CD4-positive, alpha-beta T cell (primary cell): ENCODE measurements at regions of chr9 and their contacts with region 1.

Region 1: DNA sequence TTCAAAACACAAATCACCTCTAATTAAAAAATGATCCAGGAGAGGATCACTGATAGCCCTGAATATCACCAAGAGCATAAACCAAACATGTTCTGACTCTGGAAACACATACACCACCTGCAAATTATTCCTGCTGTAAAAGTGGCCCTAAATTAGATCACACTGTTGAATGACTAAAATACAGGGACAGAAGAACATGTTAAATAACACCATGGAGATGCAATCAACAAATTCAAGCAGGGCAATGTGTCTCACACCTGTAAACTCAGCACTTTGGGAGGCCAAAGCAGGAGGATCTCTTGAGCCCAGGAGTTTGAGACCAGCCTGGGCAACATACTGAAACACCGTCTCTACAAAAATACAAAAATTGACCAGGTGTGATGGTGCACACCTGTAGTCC is 18.2 kb upstream of the SPOUT1 start:
- DNase-seq: no peak
- ATAC-seq: no peak
- H3K4me3 ChIP-seq: no peak overlapping the region
- H3K4me3 Mint-ChIP-seq: no peak overlapping the region
- H3K27ac ChIP-seq: no peak overlapping the region
- H3K27ac Mint-ChIP-seq: no peak overlapping the region
- H3K4me1 ChIP-seq: no peaks in the 10 kb centered on the region
- H3K4me1 Mint-ChIP-seq: no peaks in the 10 kb centered on the region
- H3K27me3 ChIP-seq: no peaks in the 10 kb centered on the region
- H3K27me3 Mint-ChIP-seq: no peaks in the 10 kb centered on the region
- CTCF ChIP-seq: no peak

Region 2: GRCh38 chr9:127333221-127334064 is 1514.4 kb before region 1 on chr9:
- CTCF ChIA-PET with region 1: no interaction called
- POLR2A ChIA-PET with region 1: no interaction called
- intact Hi-C with region 1: no loop called
- DNase-seq: no peak
- ATAC-seq: no peak
- H3K4me3 ChIP-seq: no peak overlapping the region
- H3K4me3 Mint-ChIP-seq: no peak overlapping the region
- H3K27ac ChIP-seq: no peak overlapping the region
- H3K27ac Mint-ChIP-seq: no peak overlapping the region
- H3K4me1 ChIP-seq: no peaks in the 10 kb centered on the region
- H3K4me1 Mint-ChIP-seq: no peaks in the 10 kb centered on the region
- H3K27me3 ChIP-seq: no peaks in the 10 kb centered on the region
- H3K27me3 Mint-ChIP-seq: peaks cover 33% of the 10 kb centered on the region
- CTCF ChIP-seq: no peak

Region 3: GRCh38 chr9:128927731-128928411 is 80.1 kb after region 1 on chr9:
- CTCF ChIA-PET with region 1: interaction called, 5 read pairs
- POLR2A ChIA-PET with region 1: no interaction called
- intact Hi-C with region 1: loop called in 1 of 2 experiments (anchors 1 kb)
- DNase-seq: peak; percentile 38 to 77 (median 46)
- ATAC-seq: peak; percentile 84
- H3K4me3 ChIP-seq: no peak overlapping the region
- H3K4me3 Mint-ChIP-seq: no peak overlapping the region
- H3K27ac ChIP-seq: no peak overlapping the region
- H3K27ac Mint-ChIP-seq: no peak overlapping the region
- H3K4me1 ChIP-seq: peaks cover 16% of the 10 kb centered on the region
- H3K4me1 Mint-ChIP-seq: peaks cover 19% of the 10 kb centered on the region
- H3K27me3 ChIP-seq: no peaks in the 10 kb centered on the region
- H3K27me3 Mint-ChIP-seq: no peaks in the 10 kb centered on the region
- CTCF ChIP-seq: peak; percentile 98